Aorta (tissue), 5 donors: ENCODE measurements at regions of chr4 and their contacts with region 1.

Region 1: GRCh38 chr4:73019462-73020047 is 50.0 kb downstream of the COX18 start:
- DNase-seq: no peak
- ATAC-seq: no peak
- H3K4me3 ChIP-seq: no peak overlapping the region
- H3K27ac ChIP-seq: no peak overlapping the region
- H3K4me1 ChIP-seq: no peaks in the 10 kb centered on the region
- H3K27me3 ChIP-seq: no peaks in the 10 kb centered on the region

Region 2: DNA sequence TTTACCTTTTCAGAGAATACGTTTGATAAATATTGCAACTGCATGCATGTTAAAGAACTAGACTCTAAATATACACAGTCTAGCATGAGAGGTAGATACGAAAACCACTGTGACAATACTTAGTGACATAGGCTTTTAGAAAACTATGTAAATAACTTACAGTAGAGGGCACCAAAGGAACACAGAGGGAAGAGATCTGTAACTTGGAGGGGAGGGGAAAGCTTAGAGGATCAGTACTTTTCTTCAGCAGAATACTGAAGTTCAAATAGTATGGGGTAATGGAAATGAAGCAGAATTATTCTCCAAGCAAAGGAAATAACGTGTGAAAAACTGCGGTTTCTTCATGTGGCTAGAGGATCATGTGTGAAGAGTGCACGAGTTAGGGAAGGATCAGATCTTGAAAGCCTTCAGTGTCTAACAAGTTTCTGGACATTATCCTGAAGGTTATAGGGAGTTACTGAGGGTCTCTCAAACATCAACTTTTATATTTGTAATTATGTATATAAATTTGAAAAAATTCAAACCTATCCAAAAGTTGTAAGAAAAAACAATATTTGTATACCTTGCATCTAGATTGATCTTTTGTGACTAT is 723.5 kb before region 1 on chr4:
- intact Hi-C with region 1: loop called in 1 of 2 experiments (anchors 10 kb)
- DNase-seq: no peak
- ATAC-seq: peak; percentile 75
- H3K4me3 ChIP-seq: no peak overlapping the region
- H3K27ac ChIP-seq: no peak overlapping the region
- H3K4me1 ChIP-seq: no peaks in the 10 kb centered on the region
- H3K27me3 ChIP-seq: no peaks in the 10 kb centered on the region

Region 3: DNA sequence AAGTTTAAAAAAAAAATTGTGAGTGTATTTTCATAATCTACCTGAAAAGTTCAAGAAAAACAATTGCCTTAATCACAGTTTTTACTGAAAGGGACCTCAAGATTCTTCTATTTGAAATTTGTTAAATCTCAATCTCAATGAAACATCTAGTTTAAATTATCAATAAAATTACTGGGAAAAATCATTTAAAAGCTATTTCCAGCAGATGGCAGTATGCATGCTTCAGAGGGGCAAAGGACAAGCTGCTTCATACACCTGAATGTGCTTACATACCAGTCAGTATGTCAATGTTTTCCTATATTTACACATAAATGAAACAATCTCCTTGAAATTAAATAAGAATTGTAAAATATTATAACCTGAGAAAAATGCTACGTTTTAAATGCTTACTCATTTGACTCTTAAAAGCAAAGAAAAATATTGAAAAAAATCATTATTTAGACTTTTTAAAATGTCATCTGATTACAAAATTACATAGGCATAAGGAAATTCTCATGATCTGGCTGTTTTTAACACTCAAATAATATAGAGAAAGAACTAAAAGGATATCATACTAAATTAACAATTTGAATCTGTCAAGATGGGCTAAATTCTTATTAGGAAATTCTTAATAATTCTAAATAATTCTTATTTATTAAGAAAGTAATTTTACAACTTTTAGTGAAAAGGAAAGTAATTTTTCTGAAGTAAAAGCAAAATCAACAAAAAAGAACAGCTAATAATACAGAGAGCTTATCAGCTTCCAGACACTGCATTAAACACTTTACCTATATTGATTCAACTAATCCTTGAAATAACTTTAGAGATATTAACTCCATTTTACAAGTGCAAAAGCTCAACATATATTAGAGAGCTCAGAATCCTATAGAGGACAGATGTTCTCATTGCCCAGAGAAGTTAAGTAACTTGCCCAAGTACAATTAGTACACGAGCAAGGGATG is 692.6 kb before region 1 on chr4:
- intact Hi-C with region 1: loop called in 1 of 2 experiments (anchors 10 kb)
- DNase-seq: no peak
- ATAC-seq: no peak
- H3K4me3 ChIP-seq: no peak overlapping the region
- H3K27ac ChIP-seq: no peak overlapping the region
- H3K4me1 ChIP-seq: no peaks in the 10 kb centered on the region
- H3K27me3 ChIP-seq: no peaks in the 10 kb centered on the region

Region 4: GRCh38 chr4:72500214-72500613 is 519.3 kb before region 1 on chr4:
- intact Hi-C with region 1: loop called (anchors 5 kb)
- DNase-seq: no peak
- ATAC-seq: no peak
- H3K4me3 ChIP-seq: no peak overlapping the region
- H3K27ac ChIP-seq: no peak overlapping the region
- H3K4me1 ChIP-seq: no peaks in the 10 kb centered on the region
- H3K27me3 ChIP-seq: no peaks in the 10 kb centered on the region

Region 5: GRCh38 chr4:72505314-72505744 is 514.2 kb before region 1 on chr4:
- intact Hi-C with region 1: loop called (anchors 5 kb)
- DNase-seq: no peak
- ATAC-seq: peak; percentile 77
- H3K4me3 ChIP-seq: no peak overlapping the region
- H3K27ac ChIP-seq: no peak overlapping the region
- H3K4me1 ChIP-seq: no peaks in the 10 kb centered on the region
- H3K27me3 ChIP-seq: no peaks in the 10 kb centered on the region

Region 6: GRCh38 chr4:72701987-72702819 is 317.4 kb before region 1 on chr4:
- intact Hi-C with region 1: loop called (anchors 2 kb)
- DNase-seq: no peak
- ATAC-seq: no peak
- H3K4me3 ChIP-seq: peak overlapping the region in 1 of 2 donors; percentile 48
- H3K27ac ChIP-seq: no peak overlapping the region
- H3K4me1 ChIP-seq: no peaks in the 10 kb centered on the region
- H3K27me3 ChIP-seq: no peaks in the 10 kb centered on the region

Region 7: DNA sequence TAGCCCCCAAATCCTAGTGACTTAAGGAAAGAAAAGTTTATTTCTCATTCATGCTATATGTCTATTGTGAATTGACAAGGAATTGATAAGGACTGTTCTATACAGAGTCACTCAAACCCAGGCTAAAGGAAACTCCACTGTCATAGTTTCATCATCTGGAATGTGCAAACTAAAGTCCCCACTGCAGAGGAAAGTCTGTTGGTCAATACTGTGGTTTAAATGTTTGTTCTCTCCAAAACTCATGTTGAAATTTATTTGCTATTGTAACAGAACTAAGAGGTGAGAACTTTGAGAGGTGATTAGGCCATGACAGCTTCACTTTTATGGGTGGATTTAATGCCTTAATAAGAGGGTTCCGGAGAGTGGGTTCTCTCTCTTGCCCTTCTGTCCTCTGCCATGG is 99.6 kb before region 1 on chr4:
- intact Hi-C with region 1: loop called in 1 of 2 experiments (anchors 10 kb)
- DNase-seq: no peak
- ATAC-seq: no peak
- H3K4me3 ChIP-seq: no peak overlapping the region
- H3K27ac ChIP-seq: no peak overlapping the region
- H3K4me1 ChIP-seq: no peaks in the 10 kb centered on the region
- H3K27me3 ChIP-seq: no peaks in the 10 kb centered on the region

Region 8: GRCh38 chr4:72969976-72970375 is 49.6 kb before region 1 on chr4:
- intact Hi-C with region 1: no loop called
- DNase-seq: peak in 1 of 2 donors; percentile 41
- ATAC-seq: peak; percentile 85
- H3K4me3 ChIP-seq: no peak overlapping the region
- H3K27ac ChIP-seq: peak overlapping the region; percentile 11 to 94
- H3K4me1 ChIP-seq: no peaks in the 10 kb centered on the region
- H3K27me3 ChIP-seq: no peaks in the 10 kb centered on the region